H1 (cell line): ENCODE measurements at regions of chr9 and their contacts with region 1.

Region 1: GRCh38 chr9:135973277-135974219 is 12.4 kb upstream of the UBAC1 start:
- DNase-seq: no peak
- H3K4me3 ChIP-seq: no peak overlapping the region
- H3K27ac ChIP-seq: no peak overlapping the region
- H3K4me1 ChIP-seq: peaks cover 0 to 3% (median 0%) of the 10 kb centered on the region in 4 experiments; a peak in 4 of 7 replicates
- H3K27me3 ChIP-seq: no peaks in the 10 kb centered on the region
- CTCF ChIP-seq: no peak
- EP300 ChIP-seq: no peak
- POLR2A ChIP-seq: no peak
- RAD21 ChIP-seq: no peak

Region 2: DNA sequence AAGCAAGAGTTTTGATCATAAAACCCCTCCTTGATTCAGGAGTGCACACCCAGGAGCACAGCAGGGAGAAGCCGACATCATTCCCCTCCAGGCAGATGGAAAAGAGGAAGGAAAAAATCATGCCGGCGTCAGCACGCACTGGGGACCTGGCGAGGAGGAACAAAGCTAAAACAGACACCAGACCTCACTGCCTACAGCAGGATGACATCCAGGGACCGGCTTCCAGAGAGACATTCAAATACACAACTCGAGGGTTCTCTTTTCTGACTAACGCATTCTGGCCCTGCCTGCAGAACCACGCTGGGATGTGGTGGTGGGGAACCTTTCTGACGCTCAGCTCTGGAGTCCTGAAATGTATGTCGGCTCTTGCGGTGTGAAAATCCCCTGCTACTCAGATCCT is 15.1 kb before region 1 on chr9:
- CTCF ChIA-PET with region 1: interaction called, 14 read pairs
- POLR2A ChIA-PET with region 1: interaction called, 5 read pairs
- DNase-seq: no peak
- H3K4me3 ChIP-seq: no peak overlapping the region
- H3K27ac ChIP-seq: no peak overlapping the region
- H3K4me1 ChIP-seq: peaks cover 4 to 7% (median 5%) of the 10 kb centered on the region in 4 experiments; a peak in 5 of 7 replicates
- H3K27me3 ChIP-seq: no peaks in the 10 kb centered on the region
- CTCF ChIP-seq: no peak
- EP300 ChIP-seq: no peak
- POLR2A ChIP-seq: no peak
- RAD21 ChIP-seq: no peak

Region 3: GRCh38 chr9:136075134-136075841 is 101.7 kb after region 1 on chr9:
- CTCF ChIA-PET with region 1: no interaction called
- POLR2A ChIA-PET with region 1: no interaction called
- DNase-seq: peak in 1 of 2 experiments; percentile 45
- H3K4me3 ChIP-seq: no peak overlapping the region
- H3K27ac ChIP-seq: no peak overlapping the region
- H3K4me1 ChIP-seq: peaks cover 0 to 5% (median 2%) of the 10 kb centered on the region in 4 experiments; a peak in 4 of 7 replicates
- H3K27me3 ChIP-seq: no peaks in the 10 kb centered on the region
- CTCF ChIP-seq: no peak
- EP300 ChIP-seq: no peak
- POLR2A ChIP-seq: no peak
- RAD21 ChIP-seq: no peak

Region 4: GRCh38 chr9:136093995-136094881 is 120.7 kb after region 1 on chr9:
- CTCF ChIA-PET with region 1: interaction called, 17 read pairs
- POLR2A ChIA-PET with region 1: no interaction called
- DNase-seq: no peak
- H3K4me3 ChIP-seq: peak overlapping the region; percentile 34 to 69 (median 49)
- H3K27ac ChIP-seq: no peak overlapping the region
- H3K4me1 ChIP-seq: peaks cover 0 to 27% (median 15%) of the 10 kb centered on the region in 4 experiments; a peak in 6 of 7 replicates
- H3K27me3 ChIP-seq: peaks cover 2 to 26% (median 23%) of the 10 kb centered on the region in 4 experiments
- CTCF ChIP-seq: no peak
- EP300 ChIP-seq: no peak
- POLR2A ChIP-seq: no peak
- RAD21 ChIP-seq: no peak

Region 5: DNA sequence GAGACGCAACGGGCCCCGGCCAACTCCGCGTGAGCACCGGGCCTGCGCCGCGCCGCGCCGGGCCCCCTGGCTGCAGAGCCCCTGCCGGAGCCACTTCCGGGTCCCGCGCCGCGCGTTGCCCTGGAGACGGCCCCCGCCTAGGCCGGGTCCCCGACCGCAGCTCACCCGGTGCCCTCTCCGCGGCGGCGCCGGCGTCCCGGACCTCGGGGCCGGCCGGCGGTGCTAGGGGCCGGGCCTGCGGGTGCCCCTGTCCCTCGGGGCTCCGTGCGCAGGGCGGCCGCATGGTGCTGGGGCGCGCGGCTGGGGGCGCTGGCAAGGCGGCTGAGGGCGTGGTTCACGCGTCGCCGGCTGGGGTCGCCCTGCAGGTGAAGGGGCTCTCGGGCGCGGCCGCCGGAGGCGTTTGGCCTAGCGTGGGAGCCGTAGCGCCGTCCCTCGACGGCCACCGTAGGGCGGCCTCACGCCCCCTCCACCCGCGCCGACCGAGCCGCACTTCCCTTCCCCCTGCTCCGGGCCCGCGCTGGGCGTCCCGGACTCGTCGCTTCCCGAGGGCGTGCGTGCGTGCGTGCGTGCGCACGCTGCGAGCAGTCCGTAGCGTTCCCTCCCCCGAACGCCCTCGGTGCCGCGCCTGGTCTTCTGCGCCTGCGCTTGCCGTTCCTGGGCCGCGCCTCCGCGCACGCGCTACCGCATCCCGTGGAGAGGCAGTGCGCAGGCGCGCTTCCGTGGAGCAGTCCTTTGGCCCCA is 144.9 kb after region 1 on chr9 and contains the start of gene TMEM250:
- CTCF ChIA-PET with region 1: interaction called, 98 read pairs
- POLR2A ChIA-PET with region 1: no interaction called
- DNase-seq: peak; percentile 87 to 94
- H3K4me3 ChIP-seq: peak within 1 kb of the TSS; percentile 50 to 79 (median 56)
- H3K27ac ChIP-seq: peak within 1 kb of the TSS; percentile 65
- H3K4me1 ChIP-seq: peaks cover 0 to 15% (median 7%) of the 10 kb centered on the region in 4 experiments; a peak in 6 of 7 replicates
- H3K27me3 ChIP-seq: no peaks in the 10 kb centered on the region
- CTCF ChIP-seq: peak in 1 of 3 experiments; percentile 39; a peak in 2 of 4 replicates
- EP300 ChIP-seq: no peak
- POLR2A ChIP-seq: peak in 1 of 2 experiments; percentile 59; a peak in 2 of 3 replicates
- RAD21 ChIP-seq: peak in 1 of 2 experiments; percentile 14; a peak in 1 of 4 replicates
- total RNA-seq, gene TMEM250: 34.9 and 35.3 TPM in 2 replicates